ENCODE measurements at regions of chrX and their contacts with region 1.

Region 1: DNA sequence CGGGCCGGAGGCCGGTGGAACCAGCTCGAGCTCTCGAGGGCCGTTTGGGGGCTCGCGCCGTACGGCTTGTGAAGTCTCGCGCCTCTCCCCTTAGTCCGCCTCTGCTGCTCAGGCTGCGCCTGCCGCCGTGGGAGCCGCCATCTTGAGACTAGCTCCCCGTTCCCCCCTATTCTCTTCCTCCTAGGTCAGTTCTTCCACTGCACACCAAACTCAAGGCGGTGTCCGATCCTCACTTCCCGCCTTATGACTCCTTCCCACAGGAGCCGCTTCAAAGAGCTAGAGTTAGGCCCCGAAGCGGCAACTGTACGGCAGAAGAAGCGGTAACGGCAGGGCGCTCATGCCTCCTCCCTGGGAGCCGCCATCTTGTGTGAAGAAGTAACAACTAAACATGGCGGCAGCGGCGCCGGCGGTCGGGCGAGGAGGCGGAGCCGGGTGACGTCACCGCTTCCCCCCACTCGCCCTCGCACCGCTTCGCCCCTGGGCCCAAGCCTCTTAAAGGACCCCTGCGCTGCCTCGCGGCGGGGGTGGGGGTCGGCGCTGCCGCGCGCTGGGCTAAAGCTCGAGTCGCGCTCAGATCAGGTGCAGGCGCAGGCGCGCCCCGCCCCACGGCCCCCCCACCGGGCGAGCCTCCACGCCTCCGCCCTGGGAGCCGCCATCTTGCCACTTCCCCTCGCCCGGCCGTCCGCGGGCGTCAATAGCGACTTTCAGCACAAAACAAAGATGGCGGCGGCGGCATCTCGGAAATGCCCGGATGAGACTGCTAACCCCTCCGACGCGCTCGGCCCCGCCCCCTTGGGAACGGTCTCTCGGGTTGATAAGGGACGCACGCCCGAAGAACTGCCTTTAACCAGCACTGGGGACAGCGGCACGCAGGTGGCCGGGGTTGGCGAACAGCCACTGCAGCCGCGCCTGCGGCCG is at the start of gene HCFC1:
- DNase-seq: peak; percentile 75
- ATAC-seq: peak; percentile 37
- H3K4me3 ChIP-seq: peak within 1 kb of the TSS; percentile 85 to 90 (median 89)
- H3K27ac ChIP-seq: peak within 1 kb of the TSS; percentile 100
- H3K4me1 ChIP-seq: peaks cover 54% of the 10 kb centered on the region
- H3K27me3 ChIP-seq: no peaks in the 10 kb centered on the region; a peak in 1 of 5 replicates
- CTCF ChIP-seq: no peak
- EP300 ChIP-seq: no peak
- POLR2A ChIP-seq: peak in 1 of 2 experiments; percentile 77; a peak in 2 of 4 replicates
- RAD21 ChIP-seq: no peak
- total RNA-seq, gene HCFC1: 17.8 and 24.0 TPM in 2 replicates

Region 2: GRCh38 chrX:153909024-153909970 is 62.4 kb before region 1 on chrX:
- CTCF ChIA-PET with region 1: no interaction called
- POLR2A ChIA-PET with region 1: no interaction called
- in situ Hi-C with region 1: no loop called
- intact Hi-C with region 1: no loop called
- DNase-seq: peak; percentile 10
- ATAC-seq: peak; percentile 53
- H3K4me3 ChIP-seq: no peak overlapping the region
- H3K27ac ChIP-seq: no peak overlapping the region
- H3K4me1 ChIP-seq: peaks cover 5% of the 10 kb centered on the region
- H3K27me3 ChIP-seq: peaks cover 0 to 4% of the 10 kb centered on the region in 2 experiments; a peak in 1 of 5 replicates
- CTCF ChIP-seq: no peak
- EP300 ChIP-seq: no peak
- POLR2A ChIP-seq: no peak
- RAD21 ChIP-seq: no peak

Region 3: GRCh38 chrX:153927922-153928760 is 43.6 kb before region 1 on chrX:
- CTCF ChIA-PET with region 1: no interaction called
- POLR2A ChIA-PET with region 1: interaction called, 23 read pairs
- in situ Hi-C with region 1: no loop called
- intact Hi-C with region 1: no loop called
- DNase-seq: peak; percentile 90
- ATAC-seq: peak; percentile 89
- H3K4me3 ChIP-seq: peak overlapping the region; percentile 71 to 79 (median 76)
- H3K27ac ChIP-seq: peak overlapping the region; percentile 89
- H3K4me1 ChIP-seq: peaks cover 52% of the 10 kb centered on the region
- H3K27me3 ChIP-seq: no peaks in the 10 kb centered on the region
- CTCF ChIP-seq: peak; percentile 31; the same call in 1 of the 2 replicates
- EP300 ChIP-seq: no peak
- POLR2A ChIP-seq: peak in 1 of 2 experiments; percentile 30; a peak in 2 of 4 replicates
- RAD21 ChIP-seq: no peak

Region 4: DNA sequence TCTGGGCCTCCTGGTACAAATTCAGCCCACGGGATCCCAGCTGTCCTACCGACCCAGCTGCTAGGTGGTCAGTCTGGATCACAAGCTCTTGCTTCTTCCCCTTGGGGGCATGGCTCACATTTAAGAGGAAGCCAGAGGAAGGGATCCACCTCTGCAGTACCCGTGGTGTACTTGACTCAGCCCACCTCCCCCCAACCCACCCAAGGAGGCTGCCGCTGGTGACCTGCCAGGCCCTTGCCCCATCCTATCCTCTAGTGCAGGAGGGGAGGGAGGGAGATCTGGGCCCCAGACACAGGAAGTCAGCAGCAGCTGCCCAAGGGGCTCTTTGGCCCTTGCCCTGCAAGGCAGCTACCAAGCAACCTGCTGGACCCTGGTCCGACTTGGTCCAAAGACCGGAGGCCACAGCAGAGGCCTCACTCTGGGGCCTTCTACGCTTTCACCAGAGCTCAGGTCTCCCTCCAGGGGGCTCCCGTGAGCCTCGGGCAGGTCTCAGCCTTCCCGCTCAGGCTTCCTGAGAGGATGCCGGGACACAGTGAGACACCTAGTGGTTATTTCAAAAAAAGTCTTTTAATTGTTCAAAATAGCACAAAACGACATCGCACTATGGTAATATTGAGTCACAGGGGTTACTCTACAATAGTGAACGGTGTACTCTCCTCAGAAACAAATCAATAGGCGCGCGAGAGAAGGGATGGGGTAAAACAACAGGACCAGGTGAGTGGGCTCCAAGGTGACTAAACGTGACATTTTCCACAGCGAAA is 24.5 kb before region 1 on chrX:
- CTCF ChIA-PET with region 1: no interaction called
- POLR2A ChIA-PET with region 1: interaction called, 14 read pairs
- in situ Hi-C with region 1: no loop called
- intact Hi-C with region 1: no loop called
- DNase-seq: peak; percentile 75
- ATAC-seq: peak; percentile 78
- H3K4me3 ChIP-seq: no peak overlapping the region
- H3K27ac ChIP-seq: peak overlapping the region; percentile 72
- H3K4me1 ChIP-seq: peaks cover 53% of the 10 kb centered on the region
- H3K27me3 ChIP-seq: no peaks in the 10 kb centered on the region
- CTCF ChIP-seq: peak; percentile 87
- EP300 ChIP-seq: peak in 1 of 2 experiments; percentile 38; a peak in 1 of 4 replicates
- POLR2A ChIP-seq: no peak
- RAD21 ChIP-seq: peak; percentile 67; the same call in 1 of the 2 replicates

Region 5: DNA sequence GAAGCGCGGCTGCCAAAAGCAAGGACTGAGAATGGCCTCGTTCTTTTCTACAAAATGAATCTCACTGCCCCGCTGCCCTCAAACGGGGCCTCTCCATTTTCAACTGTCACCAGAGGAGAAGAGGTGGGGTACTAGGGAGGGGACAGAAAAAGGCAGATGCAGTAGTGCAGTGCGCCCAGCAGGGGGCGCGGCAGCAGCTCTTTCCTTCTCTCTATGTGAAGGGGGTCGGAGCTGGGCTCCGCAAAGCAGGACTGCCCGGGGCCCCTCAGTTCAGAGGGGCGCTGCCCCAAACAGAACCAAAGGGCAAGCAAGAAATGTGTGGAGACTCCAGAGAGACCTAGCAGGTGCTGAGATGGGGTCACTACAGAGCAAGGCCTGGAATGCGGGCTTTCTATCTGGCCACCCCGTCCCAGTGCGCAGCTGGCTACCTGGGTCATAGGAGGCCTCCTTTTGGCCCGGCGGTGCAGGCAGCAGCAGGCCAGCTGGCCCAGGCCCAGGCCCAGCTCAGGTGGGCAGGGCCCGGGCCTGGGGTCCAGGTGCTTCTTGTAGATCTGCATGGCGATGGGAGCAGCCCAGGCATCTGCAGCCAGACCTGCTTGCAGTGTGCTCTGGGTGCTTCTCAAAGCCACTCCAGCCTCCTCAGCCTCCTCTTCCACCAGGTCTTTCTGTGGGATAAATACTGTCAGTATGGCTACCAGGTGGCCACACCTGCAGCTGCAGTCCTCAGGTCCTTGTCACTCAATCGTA is 42.1 kb after region 1 on chrX:
- CTCF ChIA-PET with region 1: no interaction called
- POLR2A ChIA-PET with region 1: interaction called, 54 read pairs
- in situ Hi-C with region 1: loop called (anchors 5 kb)
- intact Hi-C with region 1: loop called (anchors 2 kb)
- DNase-seq: no peak
- ATAC-seq: peak; percentile 68
- H3K4me3 ChIP-seq: peak overlapping the region in 1 of 3 experiments; percentile 37; a peak in 1 of 6 replicates
- H3K27ac ChIP-seq: peak overlapping the region; percentile 81
- H3K4me1 ChIP-seq: peaks cover 55% of the 10 kb centered on the region
- H3K27me3 ChIP-seq: no peaks in the 10 kb centered on the region
- CTCF ChIP-seq: peak; percentile 77
- EP300 ChIP-seq: no peak
- POLR2A ChIP-seq: no peak
- RAD21 ChIP-seq: 0 out of 2 replicates have a peak, but pooled peaks have one; percentile 20